ENCODE measurements at regions of chr17 and their contacts with region 1.

Region 1: DNA sequence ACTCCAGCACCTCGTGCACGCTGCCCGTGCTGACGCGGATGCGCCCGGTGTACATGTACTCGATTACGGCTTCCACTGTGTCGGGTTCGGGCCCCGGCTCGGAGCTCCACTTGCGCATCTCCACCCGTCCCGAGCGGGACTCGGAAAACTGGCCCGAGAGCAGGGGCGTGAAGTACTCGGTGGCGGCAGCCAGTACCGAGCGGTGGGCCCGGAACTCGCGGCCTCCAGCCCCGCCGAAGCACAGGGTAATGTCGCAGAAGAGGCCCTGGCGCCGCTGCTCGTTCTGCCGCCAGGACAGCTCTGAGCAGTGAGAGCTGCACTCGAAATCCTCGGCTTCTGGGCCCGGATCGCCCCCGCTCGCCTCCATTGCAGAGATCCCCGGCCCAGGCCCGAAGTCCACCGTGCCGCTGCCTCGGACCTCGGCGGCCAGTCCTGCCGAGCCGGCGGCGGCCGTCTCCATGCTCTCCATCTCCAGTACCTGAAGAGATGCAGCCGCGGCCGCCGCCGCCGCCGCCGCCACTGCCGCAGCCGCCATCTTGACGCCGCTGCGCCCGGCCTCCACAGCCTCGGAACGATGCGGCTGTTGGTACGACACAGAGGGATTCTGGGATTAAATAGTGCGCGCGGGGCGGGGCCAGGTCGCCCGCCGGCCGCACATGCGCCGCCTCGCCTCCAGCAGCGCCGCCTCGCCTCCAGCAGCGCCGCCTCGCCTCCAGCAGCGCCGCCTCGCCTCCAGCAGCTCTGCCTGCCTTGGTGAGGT is at the start of gene KLHL11:
- DNase-seq: peak; percentile 84
- ATAC-seq: peak; percentile 95
- H3K4me3 Mint-ChIP-seq: no peak within 1 kb of the TSS
- H3K27ac Mint-ChIP-seq: peak within 1 kb of the TSS; percentile 87
- H3K4me1 Mint-ChIP-seq: peaks cover 19% of the 10 kb centered on the region
- H3K27me3 Mint-ChIP-seq: no peaks in the 10 kb centered on the region
- CTCF ChIP-seq: no peak
- total RNA-seq, gene KLHL11: 13.6 and 17.3 TPM in 2 replicates

Region 2: GRCh38 chr17:41738077-41738735 is 126.8 kb before region 1 on chr17:
- CTCF ChIA-PET with region 1: no interaction called
- POLR2A ChIA-PET with region 1: no interaction called
- intact Hi-C with region 1: loop called (anchors 10 kb)
- DNase-seq: peak; percentile 77
- ATAC-seq: peak; percentile 96
- H3K4me3 Mint-ChIP-seq: no peak overlapping the region
- H3K27ac Mint-ChIP-seq: no peak overlapping the region
- H3K4me1 Mint-ChIP-seq: peaks cover 11% of the 10 kb centered on the region
- H3K27me3 Mint-ChIP-seq: peaks cover 22% of the 10 kb centered on the region
- CTCF ChIP-seq: peak; percentile 94

Region 3: GRCh38 chr17:41811549-41812380 is 53.3 kb before region 1 on chr17 and contains the start of gene P3H4:
- CTCF ChIA-PET with region 1: interaction called, 7 read pairs
- POLR2A ChIA-PET with region 1: interaction called, 9 read pairs
- intact Hi-C with region 1: loop called (anchors 2 kb)
- DNase-seq: peak; percentile 79
- ATAC-seq: peak; percentile 94
- H3K4me3 Mint-ChIP-seq: peak within 1 kb of the TSS; percentile 87
- H3K27ac Mint-ChIP-seq: peak within 1 kb of the TSS; percentile 66
- H3K4me1 Mint-ChIP-seq: peaks cover 15% of the 10 kb centered on the region
- H3K27me3 Mint-ChIP-seq: peaks cover 9% of the 10 kb centered on the region
- CTCF ChIP-seq: no peak
- total RNA-seq, gene P3H4: 0.76 and 1.9 TPM in 2 replicates

Region 4: DNA sequence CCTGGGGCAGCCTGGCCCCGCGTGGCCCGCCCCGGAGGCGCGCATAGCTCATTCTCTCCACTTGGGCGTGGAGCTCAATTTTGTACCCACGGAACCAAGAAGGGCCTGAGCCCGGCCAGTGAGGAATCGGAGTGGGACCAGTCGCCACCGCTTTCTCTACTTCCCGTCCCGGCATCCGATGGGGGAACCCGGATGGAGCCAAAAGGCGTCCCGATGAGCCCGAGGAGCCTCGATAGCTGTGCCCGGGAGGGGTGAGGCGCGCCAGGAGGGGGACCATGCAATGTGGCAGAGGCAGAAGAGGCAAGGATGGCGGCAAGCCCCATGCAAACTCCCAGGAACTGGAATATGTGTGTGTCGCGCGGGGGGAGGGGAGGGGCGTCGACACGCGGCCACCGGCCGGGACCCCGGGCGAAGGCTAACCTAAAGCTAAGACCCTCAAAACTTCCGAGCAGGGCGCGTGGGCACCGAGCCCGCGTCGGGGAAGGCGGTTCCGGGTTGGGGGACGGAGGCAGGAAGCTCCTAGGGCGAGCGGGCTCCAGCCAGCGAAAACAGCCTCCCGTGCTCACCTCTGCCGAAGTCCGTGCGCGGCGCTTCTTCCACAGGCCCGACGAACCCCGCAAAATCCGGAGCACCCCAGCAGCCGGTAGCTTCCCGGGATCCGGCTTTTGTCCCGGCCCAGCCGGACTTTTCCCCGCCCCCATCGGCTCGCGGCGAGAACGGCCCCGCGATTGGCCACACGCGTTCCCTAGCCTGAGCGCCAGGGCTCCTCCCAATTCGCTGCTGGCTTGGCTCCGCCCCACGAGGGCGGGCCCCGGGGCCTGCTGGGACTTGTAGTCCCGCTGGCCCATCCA is 53.5 kb after region 1 on chr17 and contains the start of gene ACLY:
- CTCF ChIA-PET with region 1: no interaction called
- POLR2A ChIA-PET with region 1: interaction called, 14 read pairs
- intact Hi-C with region 1: loop called (anchors 5 kb)
- DNase-seq: peak; percentile 96
- ATAC-seq: peak; percentile 99
- H3K4me3 Mint-ChIP-seq: peak within 1 kb of the TSS; percentile 92
- H3K27ac Mint-ChIP-seq: peak within 1 kb of the TSS; percentile 84
- H3K4me1 Mint-ChIP-seq: peaks cover 31% of the 10 kb centered on the region
- H3K27me3 Mint-ChIP-seq: no peaks in the 10 kb centered on the region
- CTCF ChIP-seq: no peak
- total RNA-seq, gene ACLY: 133 and 143 TPM in 2 replicates

Region 5: GRCh38 chr17:42112552-42113176 is 247.6 kb after region 1 on chr17 and contains the start of gene DHX58:
- CTCF ChIA-PET with region 1: no interaction called
- POLR2A ChIA-PET with region 1: no interaction called
- intact Hi-C with region 1: no loop called
- DNase-seq: peak; percentile 55
- ATAC-seq: peak; percentile 76
- H3K4me3 Mint-ChIP-seq: peak within 1 kb of the TSS; percentile 80
- H3K27ac Mint-ChIP-seq: peak within 1 kb of the TSS; percentile 91
- H3K4me1 Mint-ChIP-seq: peaks cover 57% of the 10 kb centered on the region
- H3K27me3 Mint-ChIP-seq: no peaks in the 10 kb centered on the region
- CTCF ChIP-seq: no peak
- total RNA-seq, gene DHX58: 21.9 and 22.4 TPM in 2 replicates

Region 6: GRCh38 chr17:42312285-42313130 is 447.5 kb after region 1 on chr17:
- CTCF ChIA-PET with region 1: no interaction called
- POLR2A ChIA-PET with region 1: no interaction called
- intact Hi-C with region 1: no loop called
- DNase-seq: peak; percentile 70
- ATAC-seq: peak; percentile 77
- H3K4me3 Mint-ChIP-seq: peak overlapping the region; percentile 53
- H3K27ac Mint-ChIP-seq: peak overlapping the region; percentile 30
- H3K4me1 Mint-ChIP-seq: peaks cover 55% of the 10 kb centered on the region
- H3K27me3 Mint-ChIP-seq: no peaks in the 10 kb centered on the region
- CTCF ChIP-seq: no peak

Region 7: DNA sequence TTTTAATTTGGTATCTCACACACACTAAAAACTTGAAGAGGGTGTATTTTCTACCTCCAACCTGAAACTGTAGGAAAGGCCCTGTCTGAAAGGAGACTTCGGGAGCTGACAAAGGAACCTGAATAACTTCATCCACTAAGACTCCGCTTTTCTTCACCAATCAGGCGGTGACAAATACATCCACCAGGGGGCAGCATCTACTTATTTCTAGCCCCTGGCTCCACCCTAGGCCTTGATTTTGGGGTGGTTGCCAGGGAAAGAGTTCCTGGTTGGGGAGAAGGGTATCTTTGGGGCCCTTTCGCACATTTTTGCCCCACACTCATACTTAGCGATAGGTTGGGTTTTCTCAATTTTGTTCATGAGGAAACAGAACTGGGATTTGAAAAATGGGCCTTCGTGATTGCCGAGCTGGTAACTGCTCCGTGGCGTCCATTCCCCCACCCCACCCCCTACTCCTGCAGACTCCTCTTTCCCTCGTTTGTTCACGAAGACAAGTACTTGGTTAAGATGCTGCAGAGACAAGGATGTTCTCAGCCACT is 1529.0 kb after region 1 on chr17:
- CTCF ChIA-PET with region 1: no interaction called
- POLR2A ChIA-PET with region 1: no interaction called
- intact Hi-C with region 1: loop called (anchors 10 kb)
- DNase-seq: peak; percentile 66
- ATAC-seq: peak; percentile 35
- H3K4me3 Mint-ChIP-seq: no peak overlapping the region
- H3K27ac Mint-ChIP-seq: peak overlapping the region; percentile 41
- H3K4me1 Mint-ChIP-seq: peaks cover 42% of the 10 kb centered on the region
- H3K27me3 Mint-ChIP-seq: no peaks in the 10 kb centered on the region
- CTCF ChIP-seq: no peak